MCF 10A (cell line): ENCODE measurements at regions of chr12 and their contacts with region 1.

Region 1: DNA sequence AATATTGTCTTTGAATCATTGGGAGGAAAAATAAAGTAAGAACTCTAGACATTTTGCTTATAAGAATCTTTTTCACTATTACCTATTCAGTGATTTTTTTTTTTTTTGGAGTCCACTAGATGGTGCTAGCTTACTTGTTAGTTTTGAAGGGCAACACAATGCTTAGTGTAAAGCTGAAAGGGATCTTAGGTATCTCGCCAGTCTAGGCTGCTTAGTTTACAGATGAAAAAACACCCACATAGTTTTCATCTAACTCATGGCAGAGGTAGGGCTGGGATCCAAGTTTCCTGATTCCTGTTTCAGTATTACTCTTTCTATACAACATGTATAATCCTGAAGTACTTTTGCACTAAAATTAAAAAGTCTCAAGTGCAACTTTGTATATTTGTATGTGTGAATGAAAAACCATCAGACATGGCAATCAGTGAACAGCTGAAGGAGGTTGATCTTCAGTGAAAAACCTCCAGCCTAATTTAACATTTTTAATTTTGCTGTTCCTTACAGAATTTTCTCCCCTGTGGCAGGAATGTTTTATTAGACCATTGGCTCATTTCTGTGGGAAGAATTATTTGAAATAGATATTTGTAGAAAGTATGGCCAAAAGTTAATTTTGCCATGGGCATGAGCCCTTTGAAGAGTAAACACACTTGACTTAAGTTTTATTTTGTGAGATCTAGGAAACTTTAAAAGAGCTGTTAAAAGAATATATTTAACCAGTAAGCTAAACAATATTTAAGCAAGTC is 40.7 kb downstream of the LRRIQ1 start:
- DNase-seq: peak; percentile 87
- H3K4me3 Mint-ChIP-seq: no peak overlapping the region
- H3K27ac Mint-ChIP-seq: peak overlapping the region; percentile 30
- H3K4me1 Mint-ChIP-seq: no peaks in the 10 kb centered on the region
- H3K27me3 Mint-ChIP-seq: no peaks in the 10 kb centered on the region
- CTCF ChIP-seq: peak; percentile 45

Region 2: GRCh38 chr12:84995646-84996045 is 81.2 kb before region 1 on chr12:
- CTCF ChIA-PET with region 1: no interaction called
- POLR2A ChIA-PET with region 1: no interaction called
- intact Hi-C with region 1: no loop called
- DNase-seq: peak; percentile 30
- H3K4me3 Mint-ChIP-seq: no peak overlapping the region
- H3K27ac Mint-ChIP-seq: peak overlapping the region; percentile 1
- H3K4me1 Mint-ChIP-seq: peaks cover 18% of the 10 kb centered on the region
- H3K27me3 Mint-ChIP-seq: no peaks in the 10 kb centered on the region
- CTCF ChIP-seq: no peak

Region 3: DNA sequence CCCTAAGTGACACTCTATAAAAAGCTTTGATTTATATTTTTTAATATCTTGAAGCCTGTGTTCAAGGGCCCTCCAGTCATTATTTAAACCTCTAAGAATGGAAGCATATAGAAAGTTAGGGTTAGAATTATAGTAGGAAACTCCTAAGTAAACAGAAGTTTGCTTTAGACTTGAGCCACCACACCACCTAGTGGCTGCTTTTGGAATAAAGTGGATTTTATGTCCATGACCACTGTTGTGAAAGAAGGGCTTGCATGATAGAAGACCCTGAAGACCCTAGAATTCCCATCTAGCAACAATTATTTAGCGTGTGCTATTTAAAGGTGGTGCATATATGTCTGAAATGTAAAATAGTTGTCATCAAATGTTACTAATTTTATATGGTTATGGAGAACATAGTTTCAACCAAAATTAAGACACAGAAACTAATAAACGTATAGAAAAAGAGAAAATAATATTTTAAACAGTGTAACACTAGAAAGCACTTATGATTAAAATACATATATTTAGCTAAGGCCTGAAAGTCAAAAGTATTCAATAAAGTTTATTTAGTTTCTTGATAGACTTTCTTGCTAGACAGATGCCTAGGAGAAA is 19.4 kb before region 1 on chr12:
- CTCF ChIA-PET with region 1: interaction called, 14 read pairs
- POLR2A ChIA-PET with region 1: no interaction called
- intact Hi-C with region 1: no loop called
- DNase-seq: peak; percentile 70
- H3K4me3 Mint-ChIP-seq: no peak overlapping the region
- H3K27ac Mint-ChIP-seq: no peak overlapping the region
- H3K4me1 Mint-ChIP-seq: peaks cover 6% of the 10 kb centered on the region
- H3K27me3 Mint-ChIP-seq: no peaks in the 10 kb centered on the region
- CTCF ChIP-seq: peak; percentile 71

Region 4: DNA sequence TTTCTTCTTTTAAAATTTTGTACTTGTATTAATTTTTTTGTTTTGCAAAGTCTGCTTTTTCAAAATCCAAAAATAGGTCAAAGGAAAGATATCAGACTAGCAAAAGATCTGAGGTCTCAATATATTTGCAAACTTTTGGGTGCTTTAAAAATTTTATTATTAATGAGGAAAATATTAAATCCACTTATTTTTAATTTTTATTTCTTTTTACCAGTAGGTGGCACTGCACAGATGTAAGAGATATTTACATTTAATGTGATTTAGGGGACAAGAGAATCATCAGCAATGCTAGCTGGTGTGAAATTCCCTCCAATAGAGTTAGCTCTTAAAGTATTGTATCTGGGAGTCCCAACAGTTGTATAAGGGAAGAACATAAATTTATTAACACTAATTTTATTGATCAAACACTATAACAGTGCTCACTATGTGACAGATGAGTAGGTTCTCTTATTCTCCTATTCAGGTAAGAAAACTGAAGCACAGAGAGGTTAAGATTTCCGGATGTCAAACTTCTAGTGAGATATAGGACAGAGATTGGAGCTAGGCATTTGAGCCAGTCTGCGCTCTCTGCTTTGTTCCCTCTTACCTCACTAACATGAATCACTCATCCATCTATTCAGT is 233.7 kb after region 1 on chr12:
- CTCF ChIA-PET with region 1: interaction called, 14 read pairs
- POLR2A ChIA-PET with region 1: no interaction called
- intact Hi-C with region 1: loop called (anchors 5 kb)
- DNase-seq: peak; percentile 11
- H3K4me3 Mint-ChIP-seq: no peak overlapping the region
- H3K27ac Mint-ChIP-seq: no peak overlapping the region
- H3K4me1 Mint-ChIP-seq: no peaks in the 10 kb centered on the region
- H3K27me3 Mint-ChIP-seq: no peaks in the 10 kb centered on the region
- CTCF ChIP-seq: peak; percentile 10

Region 5: DNA sequence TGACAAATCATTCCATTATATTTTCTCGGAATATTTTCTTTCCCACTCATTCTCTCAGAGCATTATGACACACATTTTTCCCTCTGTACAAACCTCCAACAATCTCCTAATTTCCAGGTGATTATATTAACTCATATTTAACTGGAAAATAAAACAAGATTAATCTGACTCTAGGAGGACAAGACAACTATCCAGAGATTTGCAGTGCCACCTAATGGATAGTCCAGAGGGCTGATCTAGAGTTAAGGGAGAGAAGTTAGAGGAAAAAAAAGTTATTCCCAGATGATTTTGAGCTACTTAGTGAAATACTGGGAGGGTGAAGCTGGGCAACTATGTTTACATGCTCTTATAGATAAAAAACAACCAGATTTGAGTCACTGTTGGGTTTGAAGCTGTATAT is 364.9 kb after region 1 on chr12:
- CTCF ChIA-PET with region 1: interaction called, 13 read pairs
- POLR2A ChIA-PET with region 1: no interaction called
- intact Hi-C with region 1: no loop called
- DNase-seq: peak; percentile 40
- H3K4me3 Mint-ChIP-seq: no peak overlapping the region
- H3K27ac Mint-ChIP-seq: no peak overlapping the region
- H3K4me1 Mint-ChIP-seq: no peaks in the 10 kb centered on the region
- H3K27me3 Mint-ChIP-seq: no peaks in the 10 kb centered on the region
- CTCF ChIP-seq: peak; percentile 21

Region 6: DNA sequence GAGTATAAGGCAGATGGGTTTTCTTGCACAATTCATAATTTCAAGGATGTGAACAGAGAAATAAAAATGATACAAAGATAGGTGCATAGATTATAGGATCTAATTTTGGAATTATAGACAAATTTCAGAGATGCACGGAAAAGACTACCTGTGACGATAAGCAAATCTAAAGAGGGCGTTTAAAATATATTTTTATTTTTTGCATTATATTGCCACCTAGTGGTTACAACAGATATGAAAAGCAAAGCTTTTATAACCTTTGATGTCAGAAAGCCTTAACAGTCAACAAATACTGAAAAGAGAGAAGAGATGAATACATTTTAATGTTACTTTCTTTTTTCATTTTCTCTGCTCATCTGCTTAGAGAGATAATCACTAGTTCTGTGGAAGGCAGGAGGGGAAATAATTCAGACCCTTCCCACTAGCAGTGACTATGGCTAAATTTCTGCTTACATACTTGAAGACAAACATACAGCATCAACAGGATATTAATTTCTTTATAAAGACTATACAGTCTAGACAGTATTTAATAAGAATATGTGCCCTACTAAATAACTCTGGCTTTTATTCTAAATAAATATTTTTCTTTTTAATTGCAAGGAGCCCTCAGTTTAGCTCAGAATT is 843.6 kb after region 1 on chr12:
- CTCF ChIA-PET with region 1: interaction called, 8 read pairs
- POLR2A ChIA-PET with region 1: no interaction called
- intact Hi-C with region 1: loop called (anchors 5 kb)
- DNase-seq: peak; percentile 39
- H3K4me3 Mint-ChIP-seq: no peak overlapping the region
- H3K27ac Mint-ChIP-seq: no peak overlapping the region
- H3K4me1 Mint-ChIP-seq: no peaks in the 10 kb centered on the region
- H3K27me3 Mint-ChIP-seq: no peaks in the 10 kb centered on the region
- CTCF ChIP-seq: peak; percentile 50